ENCODE measurements at regions of chr1 and their contacts with region 1.

Region 1: GRCh38 chr1:117758444-117759316 is 152.8 kb downstream of the TENT5C start:
- DNase-seq: peak; percentile 76
- H3K4me3 Mint-ChIP-seq: peak overlapping the region; percentile 58
- H3K27ac Mint-ChIP-seq: no peak overlapping the region
- H3K4me1 Mint-ChIP-seq: peaks cover 13% of the 10 kb centered on the region
- H3K27me3 Mint-ChIP-seq: peaks cover 7% of the 10 kb centered on the region

Region 2: DNA sequence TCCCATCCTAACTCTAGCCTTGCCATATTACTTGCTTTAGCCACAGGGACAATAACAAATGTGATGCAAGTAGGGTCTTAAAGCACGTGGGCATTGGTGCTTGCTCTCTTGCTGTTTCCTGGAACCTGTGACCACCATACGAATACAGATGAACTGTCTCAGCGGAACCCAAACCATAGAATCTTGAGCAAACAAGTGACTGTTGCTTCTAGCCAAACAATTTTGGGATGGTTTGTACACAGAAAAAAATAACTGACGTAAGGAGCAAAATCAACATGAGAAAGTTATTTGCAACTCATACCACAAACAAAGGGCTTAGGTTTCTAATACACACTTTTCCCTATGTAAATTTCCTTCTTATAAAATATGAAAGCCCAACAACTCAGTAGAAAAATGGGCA is 532.7 kb before region 1 on chr1:
- CTCF ChIA-PET with region 1: no interaction called
- POLR2A ChIA-PET with region 1: no interaction called
- intact Hi-C with region 1: no loop called
- DNase-seq: no peak
- H3K4me3 Mint-ChIP-seq: no peak overlapping the region
- H3K27ac Mint-ChIP-seq: no peak overlapping the region
- H3K4me1 Mint-ChIP-seq: no peaks in the 10 kb centered on the region
- H3K27me3 Mint-ChIP-seq: no peaks in the 10 kb centered on the region

Region 3: GRCh38 chr1:117501281-117501680 is 257.4 kb before region 1 on chr1:
- CTCF ChIA-PET with region 1: interaction called, 215 read pairs
- POLR2A ChIA-PET with region 1: no interaction called
- intact Hi-C with region 1: no loop called
- DNase-seq: no peak
- H3K4me3 Mint-ChIP-seq: no peak overlapping the region
- H3K27ac Mint-ChIP-seq: no peak overlapping the region
- H3K4me1 Mint-ChIP-seq: no peaks in the 10 kb centered on the region
- H3K27me3 Mint-ChIP-seq: no peaks in the 10 kb centered on the region

Region 4: DNA sequence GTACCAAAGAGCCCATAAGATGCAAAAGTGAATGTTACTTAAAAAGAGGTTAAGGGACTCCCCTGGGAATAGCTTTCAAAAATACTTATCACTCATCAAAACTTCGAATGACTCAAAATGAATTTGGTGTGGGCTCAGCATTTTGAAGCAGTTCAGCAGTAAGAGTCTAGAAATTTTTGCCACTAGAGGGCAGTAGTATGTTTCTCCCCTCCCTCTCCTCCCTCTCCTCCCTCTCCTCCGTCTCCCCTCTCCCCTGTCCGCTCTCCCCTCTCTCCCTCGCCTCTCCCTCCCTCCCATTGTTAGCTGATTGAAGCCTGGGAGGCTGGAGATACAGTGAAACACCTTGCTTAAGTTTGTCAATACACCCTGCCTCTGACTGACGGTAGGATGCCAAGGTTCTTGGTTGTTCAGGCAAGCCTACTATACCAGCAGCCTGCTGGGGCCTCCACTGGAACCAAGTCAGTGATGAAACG is 223.6 kb before region 1 on chr1:
- CTCF ChIA-PET with region 1: interaction called, 271 read pairs
- POLR2A ChIA-PET with region 1: no interaction called
- intact Hi-C with region 1: loop called (anchors 1 kb)
- DNase-seq: peak; percentile 41
- H3K4me3 Mint-ChIP-seq: no peak overlapping the region
- H3K27ac Mint-ChIP-seq: no peak overlapping the region
- H3K4me1 Mint-ChIP-seq: peaks cover 21% of the 10 kb centered on the region
- H3K27me3 Mint-ChIP-seq: peaks cover 5% of the 10 kb centered on the region

Region 5: GRCh38 chr1:117664314-117664713 is 94.4 kb before region 1 on chr1:
- CTCF ChIA-PET with region 1: interaction called, 4 read pairs
- POLR2A ChIA-PET with region 1: no interaction called
- intact Hi-C with region 1: loop called (anchors 5 kb)
- DNase-seq: peak; percentile 76
- H3K4me3 Mint-ChIP-seq: no peak overlapping the region
- H3K27ac Mint-ChIP-seq: peak overlapping the region; percentile 68
- H3K4me1 Mint-ChIP-seq: peaks cover 78% of the 10 kb centered on the region
- H3K27me3 Mint-ChIP-seq: no peaks in the 10 kb centered on the region

Region 6: DNA sequence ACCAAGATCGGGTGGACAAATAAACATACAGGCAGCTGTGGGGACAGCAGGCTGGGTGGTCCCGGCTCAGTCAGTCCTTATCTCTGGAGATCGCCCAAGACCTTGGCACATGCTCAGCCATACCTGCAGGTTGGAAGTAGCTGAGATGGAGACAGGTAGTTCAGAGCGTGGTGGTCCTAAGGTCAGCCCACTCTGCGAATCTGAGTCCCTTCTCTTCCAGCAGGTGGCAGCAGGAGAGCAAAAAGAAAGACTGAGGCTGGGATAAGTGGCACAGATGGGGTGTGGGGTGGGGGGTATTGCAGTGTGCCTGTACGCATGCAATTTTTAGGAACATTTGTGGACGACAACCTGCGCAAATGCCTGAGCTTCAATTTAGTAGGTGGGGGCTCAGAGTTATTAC is 48.0 kb before region 1 on chr1:
- CTCF ChIA-PET with region 1: interaction called, 12 read pairs
- POLR2A ChIA-PET with region 1: no interaction called
- intact Hi-C with region 1: no loop called
- DNase-seq: no peak
- H3K4me3 Mint-ChIP-seq: no peak overlapping the region
- H3K27ac Mint-ChIP-seq: no peak overlapping the region
- H3K4me1 Mint-ChIP-seq: no peaks in the 10 kb centered on the region
- H3K27me3 Mint-ChIP-seq: peaks cover 2% of the 10 kb centered on the region

Region 7: GRCh38 chr1:117770981-117771531 is 12.4 kb after region 1 on chr1:
- CTCF ChIA-PET with region 1: interaction called, 11 read pairs
- POLR2A ChIA-PET with region 1: interaction called, 3 read pairs
- intact Hi-C with region 1: no loop called
- DNase-seq: no peak
- H3K4me3 Mint-ChIP-seq: no peak overlapping the region
- H3K27ac Mint-ChIP-seq: no peak overlapping the region
- H3K4me1 Mint-ChIP-seq: no peaks in the 10 kb centered on the region
- H3K27me3 Mint-ChIP-seq: peaks cover 16% of the 10 kb centered on the region